ENCODE measurements at regions of chr6 and their contacts with region 1.

Region 1: GRCh38 chr6:112043032-112044007 is 10.6 kb upstream of the CCN6 start:
- DNase-seq: peak; percentile 87 to 96 (median 93)
- ATAC-seq: peak; percentile 93
- H3K4me3 ChIP-seq: peak overlapping the region; percentile 56 to 65
- H3K4me3 Mint-ChIP-seq: peak overlapping the region; percentile 97
- H3K27ac ChIP-seq: peak overlapping the region; percentile 83 to 88
- H3K27ac Mint-ChIP-seq: peak overlapping the region; percentile 99
- H3K4me1 ChIP-seq: peaks cover 6% of the 10 kb centered on the region
- H3K4me1 Mint-ChIP-seq: peaks cover 21% of the 10 kb centered on the region
- H3K27me3 ChIP-seq: no peaks in the 10 kb centered on the region
- H3K27me3 Mint-ChIP-seq: no peaks in the 10 kb centered on the region
- CTCF ChIP-seq: peak; percentile 82

Region 2: DNA sequence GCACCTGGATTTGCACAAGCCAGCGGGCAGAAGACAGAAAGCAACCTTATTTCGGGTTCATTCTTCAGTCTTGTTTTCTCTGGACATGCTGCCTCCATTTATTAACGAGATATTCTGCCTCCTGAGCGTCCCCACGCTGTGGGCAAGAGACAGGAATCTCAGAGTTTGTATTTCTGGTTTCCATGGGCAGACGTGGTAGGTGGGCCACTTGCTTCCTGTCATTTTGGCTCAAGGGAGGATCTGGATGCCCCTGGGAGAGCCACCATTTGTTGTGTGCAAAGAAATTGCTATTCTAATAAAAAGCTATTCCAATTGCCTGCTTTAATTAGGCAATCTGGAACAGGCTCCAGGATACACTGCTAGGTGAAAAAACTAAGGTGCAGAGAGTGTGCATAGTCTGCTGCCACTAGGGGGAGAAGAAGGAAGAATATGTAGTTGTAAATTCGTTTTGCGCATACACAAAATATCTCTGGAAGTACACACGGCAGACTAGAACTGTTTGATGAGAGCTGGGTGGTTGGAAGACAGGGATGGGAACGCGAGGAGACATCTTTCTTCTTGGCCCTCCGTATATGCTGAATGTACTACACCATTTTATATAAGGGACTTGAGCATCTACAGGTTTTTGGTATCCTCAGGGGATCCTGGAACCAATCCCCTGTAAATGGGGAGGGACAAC is 986.1 kb before region 1 on chr6:
- CTCF ChIA-PET with region 1: interaction called, 5 read pairs
- POLR2A ChIA-PET with region 1: no interaction called
- intact Hi-C with region 1: loop called (anchors 1 to 2 kb)
- DNase-seq: peak in 2 of 9 experiments; percentile 49 to 64
- ATAC-seq: peak; percentile 65
- H3K4me3 ChIP-seq: no peak overlapping the region
- H3K4me3 Mint-ChIP-seq: no peak overlapping the region
- H3K27ac ChIP-seq: no peak overlapping the region
- H3K27ac Mint-ChIP-seq: no peak overlapping the region
- H3K4me1 ChIP-seq: no peaks in the 10 kb centered on the region
- H3K4me1 Mint-ChIP-seq: peaks cover 2% of the 10 kb centered on the region
- H3K27me3 ChIP-seq: no peaks in the 10 kb centered on the region
- H3K27me3 Mint-ChIP-seq: no peaks in the 10 kb centered on the region
- CTCF ChIP-seq: peak; percentile 61

Region 3: GRCh38 chr6:111703723-111704122 is 339.6 kb before region 1 on chr6:
- CTCF ChIA-PET with region 1: interaction called, 115 read pairs
- POLR2A ChIA-PET with region 1: no interaction called
- intact Hi-C with region 1: no loop called
- DNase-seq: no peak
- ATAC-seq: no peak
- H3K4me3 ChIP-seq: no peak overlapping the region
- H3K4me3 Mint-ChIP-seq: no peak overlapping the region
- H3K27ac ChIP-seq: no peak overlapping the region
- H3K27ac Mint-ChIP-seq: no peak overlapping the region
- H3K4me1 ChIP-seq: peaks cover 10% of the 10 kb centered on the region
- H3K4me1 Mint-ChIP-seq: peaks cover 29% of the 10 kb centered on the region
- H3K27me3 ChIP-seq: no peaks in the 10 kb centered on the region
- H3K27me3 Mint-ChIP-seq: no peaks in the 10 kb centered on the region
- CTCF ChIP-seq: no peak

Region 4: DNA sequence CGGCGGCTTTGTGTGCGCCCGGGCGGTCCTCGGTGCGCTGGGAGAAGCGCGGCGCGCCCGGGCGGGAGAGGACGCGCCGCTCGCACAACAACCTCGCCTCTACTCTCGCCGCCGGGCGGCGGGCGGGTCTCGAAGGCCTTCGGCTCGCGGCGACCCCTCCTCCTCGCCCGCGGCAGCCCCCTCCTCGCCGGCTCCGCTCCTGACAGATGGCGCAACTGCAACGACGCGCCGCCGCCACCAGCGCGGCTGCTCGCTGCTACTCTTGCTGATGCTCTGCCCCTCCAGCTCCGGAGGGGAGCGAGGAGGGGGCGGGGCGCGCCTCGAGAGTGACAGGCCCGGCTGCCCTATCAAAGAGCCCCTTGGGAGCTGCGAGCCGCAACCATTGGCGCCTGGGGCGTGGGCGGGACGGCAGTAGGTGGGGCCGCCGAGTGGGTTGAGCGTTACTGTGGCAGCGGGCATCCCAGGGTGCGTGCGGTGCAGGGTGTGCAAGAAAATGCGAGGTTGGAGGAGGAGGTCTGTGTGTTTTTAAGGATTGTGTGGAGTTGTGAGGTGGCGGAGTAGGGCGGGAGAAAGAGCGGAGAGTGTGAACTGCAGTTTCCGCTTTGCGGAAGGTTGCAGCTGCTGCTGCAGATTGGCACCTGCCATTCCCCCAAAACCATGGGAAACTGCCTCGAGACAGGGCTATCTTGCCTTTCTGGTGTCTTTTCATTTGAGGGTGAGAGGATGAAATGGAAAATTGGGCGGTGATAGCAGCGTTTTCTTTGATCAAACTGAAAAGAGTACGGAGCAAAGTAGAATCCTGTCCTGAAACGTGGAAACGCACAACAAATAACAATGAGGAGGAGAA is 169.9 kb before region 1 on chr6 and contains the start of gene FYN:
- CTCF ChIA-PET with region 1: interaction called, 4 read pairs
- POLR2A ChIA-PET with region 1: interaction called, 3 read pairs
- intact Hi-C with region 1: loop called (anchors 1 to 2 kb)
- DNase-seq: peak; percentile 97 to 99 (median 98)
- ATAC-seq: peak; percentile 87
- H3K4me3 ChIP-seq: peak within 1 kb of the TSS; percentile 91 to 94
- H3K4me3 Mint-ChIP-seq: peak within 1 kb of the TSS; percentile 97
- H3K27ac ChIP-seq: peak within 1 kb of the TSS; percentile 86 to 91
- H3K27ac Mint-ChIP-seq: peak within 1 kb of the TSS; percentile 98
- H3K4me1 ChIP-seq: peaks cover 35% of the 10 kb centered on the region
- H3K4me1 Mint-ChIP-seq: peaks cover 41% of the 10 kb centered on the region
- H3K27me3 ChIP-seq: no peaks in the 10 kb centered on the region
- H3K27me3 Mint-ChIP-seq: no peaks in the 10 kb centered on the region
- CTCF ChIP-seq: peak; percentile 42
- total RNA-seq, gene FYN: 479 to 483 TPM

Region 5: GRCh38 chr6:112018619-112019416 is 24.5 kb before region 1 on chr6:
- CTCF ChIA-PET with region 1: interaction called, 122 read pairs
- POLR2A ChIA-PET with region 1: interaction called, 4 read pairs
- intact Hi-C with region 1: no loop called
- DNase-seq: no peak
- ATAC-seq: no peak
- H3K4me3 ChIP-seq: no peak overlapping the region
- H3K4me3 Mint-ChIP-seq: no peak overlapping the region
- H3K27ac ChIP-seq: no peak overlapping the region
- H3K27ac Mint-ChIP-seq: no peak overlapping the region
- H3K4me1 ChIP-seq: no peaks in the 10 kb centered on the region
- H3K4me1 Mint-ChIP-seq: peaks cover 17% of the 10 kb centered on the region
- H3K27me3 ChIP-seq: no peaks in the 10 kb centered on the region
- H3K27me3 Mint-ChIP-seq: no peaks in the 10 kb centered on the region
- CTCF ChIP-seq: no peak

Measured in CD8-positive, alpha-beta T cell (primary cell).